IMR-90 (cell line): ENCODE measurements at regions of chr4 and their contacts with region 1.

Region 1: DNA sequence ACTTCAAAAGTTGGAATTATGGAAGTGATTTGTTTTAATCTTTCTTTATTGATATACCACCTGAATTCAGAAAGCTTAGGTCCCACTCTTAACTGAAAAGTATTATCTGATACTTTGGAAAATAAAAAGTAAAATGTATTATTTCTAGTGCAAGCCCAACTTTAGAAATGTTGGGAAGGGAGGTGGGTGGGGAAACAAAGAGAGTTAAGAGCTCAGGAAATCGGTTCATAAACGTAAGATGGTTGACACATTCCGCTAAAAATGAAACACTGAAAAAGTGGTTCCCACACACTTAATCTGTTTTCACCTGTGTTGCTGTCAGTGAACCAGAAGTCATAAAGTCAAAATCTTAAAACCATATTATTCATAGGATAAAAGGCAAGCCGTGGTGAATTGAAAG is 237.4 kb downstream of the BANK1 start:
- DNase-seq: no peak
- ATAC-seq: no peak
- H3K4me3 ChIP-seq: no peak overlapping the region
- H3K27ac ChIP-seq: no peak overlapping the region
- H3K4me1 ChIP-seq: no peaks in the 10 kb centered on the region
- H3K27me3 ChIP-seq: no peaks in the 10 kb centered on the region
- CTCF ChIP-seq: no peak
- POLR2A ChIP-seq: no peak
- RAD21 ChIP-seq: no peak

Region 2: DNA sequence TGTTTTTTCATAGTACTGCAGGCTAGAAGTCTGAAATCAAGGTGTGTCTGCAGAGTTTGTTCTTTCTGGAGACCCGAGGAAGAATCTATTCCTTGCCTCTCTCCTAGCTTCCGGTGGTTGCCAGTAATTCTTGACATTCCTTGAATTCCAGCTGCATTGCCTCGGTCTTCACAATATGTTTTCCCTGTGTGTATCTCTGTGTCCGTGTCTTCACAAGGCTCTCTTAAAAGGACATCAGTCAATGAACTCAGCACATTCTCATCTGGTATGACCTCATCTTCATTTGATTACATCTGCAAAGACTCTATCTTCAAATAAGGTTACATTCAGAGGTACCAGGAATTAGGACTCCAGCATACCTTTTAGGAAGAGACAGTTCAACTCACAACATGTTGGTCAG is 74.0 kb before region 1 on chr4:
- CTCF ChIA-PET with region 1: no interaction called
- POLR2A ChIA-PET with region 1: no interaction called
- dilution Hi-C with region 1: no loop called
- in situ Hi-C with region 1: no loop called
- intact Hi-C with region 1: no loop called
- DNase-seq: peak; percentile 45
- ATAC-seq: peak; percentile 68
- H3K4me3 ChIP-seq: no peak overlapping the region
- H3K27ac ChIP-seq: no peak overlapping the region
- H3K4me1 ChIP-seq: no peaks in the 10 kb centered on the region
- H3K27me3 ChIP-seq: no peaks in the 10 kb centered on the region
- CTCF ChIP-seq: no peak
- POLR2A ChIP-seq: no peak
- RAD21 ChIP-seq: no peak

Region 3: DNA sequence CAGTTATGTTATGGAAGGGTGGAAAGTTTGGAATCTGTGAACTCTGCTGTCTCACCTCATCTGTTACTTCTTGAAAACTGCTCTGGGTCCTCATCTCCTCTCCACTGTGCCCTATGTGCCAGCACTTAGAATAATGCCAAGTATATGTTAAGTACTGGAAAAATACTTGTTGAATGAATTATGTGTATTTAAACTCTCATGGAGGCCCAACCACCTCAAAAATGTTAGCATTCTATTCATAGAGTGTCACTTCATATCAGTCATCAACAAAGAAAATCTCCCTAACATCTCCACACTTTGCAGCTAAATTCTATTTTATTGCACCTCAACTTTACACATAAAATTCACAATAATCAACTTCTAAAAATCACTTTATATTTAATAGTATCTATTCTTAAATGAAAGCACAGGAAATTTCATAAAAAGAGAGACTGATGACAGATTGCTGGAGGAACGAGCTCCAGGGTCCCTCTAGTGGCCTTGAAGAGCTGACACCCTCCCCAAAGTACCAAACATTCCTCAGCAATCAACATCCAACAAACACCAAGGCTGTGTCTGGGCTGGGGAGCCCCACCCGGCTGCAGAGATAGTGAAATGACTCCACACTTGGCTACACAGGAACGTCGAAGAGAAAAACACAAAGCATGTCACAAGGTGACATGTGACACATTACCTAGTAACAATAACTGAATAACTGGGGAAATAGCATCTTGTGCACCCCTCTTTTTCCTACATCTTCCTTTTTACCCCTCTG is 271.6 kb after region 1 on chr4:
- CTCF ChIA-PET with region 1: no interaction called
- POLR2A ChIA-PET with region 1: no interaction called
- dilution Hi-C with region 1: no loop called
- in situ Hi-C with region 1: no loop called
- intact Hi-C with region 1: loop called (anchors 5 kb)
- DNase-seq: peak; percentile 11
- ATAC-seq: peak; percentile 75
- H3K4me3 ChIP-seq: no peak overlapping the region
- H3K27ac ChIP-seq: no peak overlapping the region
- H3K4me1 ChIP-seq: no peaks in the 10 kb centered on the region
- H3K27me3 ChIP-seq: no peaks in the 10 kb centered on the region
- CTCF ChIP-seq: peak; percentile 43
- POLR2A ChIP-seq: no peak
- RAD21 ChIP-seq: peak; percentile 43

Region 4: DNA sequence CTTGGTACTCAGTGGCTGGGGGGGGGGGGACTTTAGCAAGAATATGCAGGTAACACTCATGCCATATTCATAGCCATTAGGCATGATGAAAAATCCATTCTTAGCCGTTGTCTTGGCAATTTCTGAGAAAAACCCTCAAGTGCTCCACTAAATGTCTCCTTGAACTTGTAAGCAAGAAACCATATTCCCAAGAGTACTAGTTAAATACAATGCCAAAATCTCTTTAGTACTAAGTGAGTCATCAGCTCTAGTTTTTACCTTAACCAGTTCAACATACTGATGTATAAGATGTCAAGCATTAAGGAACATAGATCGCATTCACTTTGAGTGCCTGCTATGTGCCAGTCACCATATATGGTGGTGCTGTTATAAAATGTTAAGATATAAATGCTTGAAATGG is 771.9 kb after region 1 on chr4:
- CTCF ChIA-PET with region 1: no interaction called
- POLR2A ChIA-PET with region 1: no interaction called
- dilution Hi-C with region 1: no loop called
- in situ Hi-C with region 1: no loop called
- intact Hi-C with region 1: no loop called
- DNase-seq: no peak
- ATAC-seq: no peak
- H3K4me3 ChIP-seq: no peak overlapping the region
- H3K27ac ChIP-seq: no peak overlapping the region
- H3K4me1 ChIP-seq: no peaks in the 10 kb centered on the region
- H3K27me3 ChIP-seq: no peaks in the 10 kb centered on the region
- CTCF ChIP-seq: no peak
- POLR2A ChIP-seq: no peak
- RAD21 ChIP-seq: no peak